Psoas muscle (tissue), 8 donors: ENCODE measurements at regions of chr3 and their contacts with region 1.

Region 1: DNA sequence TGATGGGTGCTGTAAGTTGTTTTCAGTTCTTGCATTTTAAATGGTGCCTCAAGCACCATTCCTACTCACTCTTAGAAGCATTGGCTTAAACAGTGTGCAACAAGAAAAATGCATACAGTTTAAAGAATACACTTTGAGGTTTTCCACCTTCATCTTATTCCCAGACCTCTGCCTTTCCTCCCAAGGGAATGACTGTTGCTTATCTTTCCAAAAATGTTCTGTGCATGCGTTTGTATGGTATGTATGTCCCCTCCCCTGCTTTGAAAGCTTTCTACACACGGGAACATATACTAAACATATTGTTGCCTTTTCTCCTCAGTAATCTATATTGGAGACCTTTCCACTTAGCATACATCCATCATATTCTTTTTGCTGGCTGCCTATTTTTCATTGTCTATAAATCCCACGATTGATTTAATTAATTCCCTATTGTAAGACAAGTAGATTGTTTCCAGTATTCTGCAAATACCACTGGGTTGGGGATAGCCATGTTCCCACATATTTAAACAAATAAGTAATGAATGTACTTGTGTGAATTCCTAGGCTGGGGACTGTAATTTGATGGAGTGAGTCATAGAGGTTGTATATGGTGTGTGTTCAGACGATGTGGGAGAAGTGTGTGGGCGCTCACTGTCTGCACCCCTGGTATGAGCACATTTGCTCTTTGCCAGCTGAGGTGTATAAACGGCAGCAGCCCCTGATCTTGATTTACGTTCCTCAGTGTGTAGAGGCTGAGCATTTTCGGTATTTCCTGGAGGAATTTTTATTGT is 5.8 kb downstream of the TRAK1 start:
- DNase-seq: no peak
- ATAC-seq: no peak
- H3K4me3 ChIP-seq: no peak overlapping the region
- H3K27ac ChIP-seq: peak overlapping the region; percentile 47
- H3K4me1 ChIP-seq: peaks cover 55% of the 10 kb centered on the region
- H3K27me3 ChIP-seq: no peaks in the 10 kb centered on the region
- CTCF ChIP-seq: no peak

Region 2: GRCh38 chr3:41893977-41894376 is 203.0 kb before region 1 on chr3:
- intact Hi-C with region 1: loop called (anchors 1 to 5 kb)
- DNase-seq: no peak
- ATAC-seq: peak in 1 of 4 donors; percentile 59
- H3K4me3 ChIP-seq: no peak overlapping the region
- H3K27ac ChIP-seq: no peak overlapping the region
- H3K4me1 ChIP-seq: no peaks in the 10 kb centered on the region
- H3K27me3 ChIP-seq: no peaks in the 10 kb centered on the region
- CTCF ChIP-seq: peak; percentile 60

Region 3: GRCh38 chr3:41900265-41900664 is 196.7 kb before region 1 on chr3:
- intact Hi-C with region 1: loop called in 1 of 2 experiments (anchors 5 kb)
- DNase-seq: no peak
- ATAC-seq: no peak
- H3K4me3 ChIP-seq: no peak overlapping the region
- H3K27ac ChIP-seq: no peak overlapping the region
- H3K4me1 ChIP-seq: no peaks in the 10 kb centered on the region
- H3K27me3 ChIP-seq: no peaks in the 10 kb centered on the region
- CTCF ChIP-seq: no peak

Region 4: DNA sequence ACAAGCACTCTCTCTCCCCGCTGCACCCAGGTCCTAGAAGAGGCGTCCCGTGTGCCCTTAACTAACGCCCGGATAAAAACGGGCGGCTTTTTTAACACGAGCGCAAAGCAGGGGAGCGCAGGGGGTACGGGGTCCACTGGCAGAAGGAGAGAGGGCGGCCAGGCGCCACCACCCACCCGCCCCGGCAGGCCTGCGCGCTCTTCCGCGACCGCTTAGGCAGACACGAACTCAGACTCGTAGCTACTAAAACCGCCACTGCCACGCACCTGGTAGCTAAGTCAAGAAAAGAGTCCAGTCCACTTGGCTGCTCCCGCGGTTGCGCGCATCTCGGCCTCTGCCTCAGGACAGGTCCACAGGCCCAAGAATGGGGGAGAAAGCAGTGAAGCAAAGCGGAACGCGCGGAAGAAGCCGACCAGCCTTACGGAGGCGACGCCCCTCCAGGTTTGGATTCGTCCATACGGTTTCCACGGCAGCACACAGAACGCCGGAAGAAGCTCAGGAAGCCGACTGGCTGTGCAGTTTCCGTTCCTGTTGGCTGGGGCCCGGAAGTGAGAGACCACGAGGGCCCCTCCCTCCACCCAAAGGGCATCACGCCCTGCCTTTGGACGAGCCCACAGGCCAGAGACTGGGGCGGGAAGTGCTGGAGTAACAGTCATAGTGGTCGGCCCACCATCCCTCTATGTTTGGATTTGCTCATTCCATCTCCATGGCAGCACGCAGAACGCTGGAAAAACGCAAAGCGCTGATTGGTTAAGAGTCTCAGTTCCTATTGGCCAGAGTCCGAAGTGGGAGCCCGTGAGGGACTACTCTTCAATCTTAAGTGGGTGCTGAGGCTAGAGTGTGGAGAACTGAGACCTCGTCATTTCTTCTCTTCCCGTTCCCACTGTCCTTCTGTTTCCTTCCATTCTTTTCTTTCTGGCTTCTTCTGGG is 135.0 kb before region 1 on chr3 and contains the start of gene ULK4:
- intact Hi-C with region 1: loop called in 1 of 2 experiments (anchors 5 kb)
- DNase-seq: peak; percentile 97 to 99
- ATAC-seq: peak; percentile 98 to 99 (median 98)
- H3K4me3 ChIP-seq: peak within 1 kb of the TSS; percentile 89
- H3K27ac ChIP-seq: peak within 1 kb of the TSS; percentile 66
- H3K4me1 ChIP-seq: peaks cover 5% of the 10 kb centered on the region
- H3K27me3 ChIP-seq: no peaks in the 10 kb centered on the region
- CTCF ChIP-seq: no peak
- total RNA-seq, gene ULK4: 0.86 to 3.2 (median 0.99) TPM

Region 5: GRCh38 chr3:42403737-42404136 is 306.8 kb after region 1 on chr3:
- intact Hi-C with region 1: no loop called
- DNase-seq: no peak
- ATAC-seq: no peak
- H3K4me3 ChIP-seq: no peak overlapping the region
- H3K27ac ChIP-seq: no peak overlapping the region
- H3K4me1 ChIP-seq: no peaks in the 10 kb centered on the region
- H3K27me3 ChIP-seq: no peaks in the 10 kb centered on the region
- CTCF ChIP-seq: no peak